ENCODE measurements at regions of chr7 and their contacts with region 1.

Region 1: GRCh38 chr7:155763691-155764437 is 48.4 kb downstream of the SHH start:
- DNase-seq: no peak
- H3K4me3 ChIP-seq: no peak overlapping the region
- H3K27ac ChIP-seq: no peak overlapping the region
- H3K4me1 ChIP-seq: no peaks in the 10 kb centered on the region
- H3K27me3 ChIP-seq: no peaks in the 10 kb centered on the region
- CTCF ChIP-seq: no peak

Region 2: GRCh38 chr7:154913638-154914312 is 850.1 kb before region 1 on chr7:
- CTCF ChIA-PET with region 1: no interaction called
- POLR2A ChIA-PET with region 1: no interaction called
- intact Hi-C with region 1: loop called (anchors 1 kb)
- DNase-seq: peak; percentile 59 to 84
- H3K4me3 ChIP-seq: no peak overlapping the region
- H3K27ac ChIP-seq: no peak overlapping the region
- H3K4me1 ChIP-seq: no peaks in the 10 kb centered on the region
- H3K27me3 ChIP-seq: peaks cover 91% of the 10 kb centered on the region
- CTCF ChIP-seq: peak; percentile 97

Region 3: DNA sequence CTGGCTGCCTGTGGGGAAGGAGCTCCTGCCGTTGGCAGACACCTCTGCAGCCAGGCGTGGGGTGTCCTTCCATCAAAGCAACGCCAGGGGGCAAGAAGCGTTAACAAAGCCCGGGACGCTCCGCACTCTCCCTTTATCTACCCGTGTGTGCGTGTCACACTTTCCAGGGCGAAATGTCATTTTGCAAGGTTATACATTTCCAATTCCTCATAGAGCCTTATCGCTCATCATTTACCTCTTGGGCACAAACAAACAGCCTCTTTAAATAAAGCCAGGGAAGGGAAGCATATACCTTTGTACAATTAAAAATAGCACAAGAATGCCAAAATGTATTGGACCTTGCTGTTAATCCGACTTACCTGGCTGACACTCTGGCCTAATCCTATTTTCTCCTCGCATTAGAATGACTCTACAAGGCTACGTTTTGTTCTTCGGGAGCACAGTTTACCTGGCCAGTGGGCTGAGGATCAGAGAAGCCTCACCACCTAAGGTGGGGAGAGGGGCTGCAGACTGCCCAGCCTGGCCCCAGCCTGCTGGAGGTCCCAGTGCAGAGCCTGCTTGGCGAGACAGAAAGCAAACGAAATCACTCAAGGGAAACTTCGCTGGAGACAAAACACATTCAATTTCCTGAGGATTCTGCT is 383.5 kb before region 1 on chr7:
- CTCF ChIA-PET with region 1: no interaction called
- POLR2A ChIA-PET with region 1: no interaction called
- intact Hi-C with region 1: loop called (anchors 1 kb)
- DNase-seq: peak; percentile 46 to 55
- H3K4me3 ChIP-seq: no peak overlapping the region
- H3K27ac ChIP-seq: no peak overlapping the region
- H3K4me1 ChIP-seq: no peaks in the 10 kb centered on the region
- H3K27me3 ChIP-seq: peaks cover 100% of the 10 kb centered on the region
- CTCF ChIP-seq: peak; percentile 85

Region 4: GRCh38 chr7:155598810-155599210 is 165.1 kb before region 1 on chr7:
- CTCF ChIA-PET with region 1: interaction called, 3 read pairs
- POLR2A ChIA-PET with region 1: interaction called, 4 read pairs
- intact Hi-C with region 1: loop called (anchors 1 kb)
- DNase-seq: peak; percentile 52 to 70
- H3K4me3 ChIP-seq: no peak overlapping the region
- H3K27ac ChIP-seq: no peak overlapping the region
- H3K4me1 ChIP-seq: no peaks in the 10 kb centered on the region
- H3K27me3 ChIP-seq: peaks cover 87% of the 10 kb centered on the region
- CTCF ChIP-seq: peak; percentile 100

Region 5: GRCh38 chr7:156169474-156170370 is 405.9 kb after region 1 on chr7:
- CTCF ChIA-PET with region 1: no interaction called
- POLR2A ChIA-PET with region 1: no interaction called
- intact Hi-C with region 1: no loop called
- DNase-seq: no peak
- H3K4me3 ChIP-seq: no peak overlapping the region
- H3K27ac ChIP-seq: no peak overlapping the region
- H3K4me1 ChIP-seq: no peaks in the 10 kb centered on the region
- H3K27me3 ChIP-seq: peaks cover 86% of the 10 kb centered on the region
- CTCF ChIP-seq: no peak

Region 6: DNA sequence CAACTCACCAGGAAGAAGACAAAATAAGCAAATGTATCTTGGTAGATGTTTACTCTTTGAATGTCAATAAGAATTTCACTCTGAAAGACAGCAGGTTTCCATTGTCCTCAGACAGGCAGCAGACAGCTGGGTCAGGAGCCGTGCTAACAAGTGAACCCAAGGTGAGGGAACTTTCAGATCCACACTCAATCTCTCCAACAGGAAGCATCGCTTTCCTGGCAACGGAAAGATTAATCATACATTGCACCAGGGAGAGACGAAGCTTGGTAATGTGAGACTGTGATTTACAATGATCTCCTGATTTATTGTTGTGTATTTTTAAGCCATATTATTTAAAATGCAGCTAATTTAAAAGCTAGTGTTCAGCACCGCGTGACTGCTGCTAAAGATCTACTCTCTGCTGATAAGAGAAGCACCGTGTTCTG is 1168.1 kb after region 1 on chr7:
- CTCF ChIA-PET with region 1: no interaction called
- POLR2A ChIA-PET with region 1: interaction called, 10 read pairs
- intact Hi-C with region 1: no loop called
- DNase-seq: no peak
- H3K4me3 ChIP-seq: no peak overlapping the region
- H3K27ac ChIP-seq: no peak overlapping the region
- H3K4me1 ChIP-seq: no peaks in the 10 kb centered on the region
- H3K27me3 ChIP-seq: peaks cover 14% of the 10 kb centered on the region
- CTCF ChIP-seq: no peak

Measured in PC-9 (cell line).